GM10248 (cell line): ENCODE measurements at regions of chr11 and their contacts with region 1.

Region 1: GRCh38 chr11:74255741-74256369 is 55.6 kb downstream of the P4HA3 start:
- DNase-seq: peak; percentile 79
- CTCF ChIP-seq: peak; percentile 87

Region 2: GRCh38 chr11:73965076-73965860 is 290.6 kb before region 1 on chr11:
- CTCF ChIA-PET with region 1: interaction called, 11 read pairs
- POLR2A ChIA-PET with region 1: no interaction called
- DNase-seq: no peak
- CTCF ChIP-seq: no peak

Region 3: GRCh38 chr11:74237541-74237940 is 18.3 kb before region 1 on chr11:
- CTCF ChIA-PET with region 1: interaction called, 19 read pairs
- POLR2A ChIA-PET with region 1: no interaction called
- DNase-seq: no peak
- CTCF ChIP-seq: no peak

Region 4: DNA sequence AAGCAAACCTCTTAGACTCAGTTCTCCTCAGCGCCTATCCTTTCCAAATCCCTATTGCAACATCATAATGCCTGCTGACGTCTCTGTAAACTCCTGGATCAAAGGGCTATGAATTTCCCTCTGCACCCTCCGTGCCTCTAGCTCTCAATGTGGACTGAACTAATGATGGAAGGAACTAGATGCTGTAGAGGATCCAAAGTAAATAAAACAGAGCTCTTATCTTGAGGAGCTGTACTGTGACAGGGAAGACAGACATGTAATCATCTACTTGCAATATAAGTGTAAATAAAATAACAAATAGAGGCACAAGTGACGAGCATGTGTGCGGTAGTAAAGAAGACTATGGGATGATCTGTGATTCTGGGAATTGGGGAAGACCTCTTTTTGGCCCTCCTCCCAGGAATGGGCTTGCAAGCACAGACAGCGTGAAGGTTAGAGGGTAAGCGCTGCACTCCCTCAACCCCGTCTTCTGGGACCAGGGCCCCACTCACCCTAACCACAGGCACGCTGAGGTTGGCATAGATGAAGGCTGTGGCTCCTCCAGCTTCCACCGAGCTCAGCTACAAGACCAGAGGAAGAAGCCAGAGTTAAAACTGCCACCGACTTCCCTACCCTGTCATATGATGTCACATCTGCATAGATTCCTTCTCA is 13.4 kb after region 1 on chr11:
- CTCF ChIA-PET with region 1: interaction called, 16 read pairs
- POLR2A ChIA-PET with region 1: no interaction called
- DNase-seq: no peak
- CTCF ChIP-seq: no peak

Region 5: GRCh38 chr11:74321487-74322188 is 65.8 kb after region 1 on chr11:
- CTCF ChIA-PET with region 1: interaction called, 22 read pairs
- POLR2A ChIA-PET with region 1: no interaction called
- DNase-seq: no peak
- CTCF ChIP-seq: peak; percentile 50

Region 6: DNA sequence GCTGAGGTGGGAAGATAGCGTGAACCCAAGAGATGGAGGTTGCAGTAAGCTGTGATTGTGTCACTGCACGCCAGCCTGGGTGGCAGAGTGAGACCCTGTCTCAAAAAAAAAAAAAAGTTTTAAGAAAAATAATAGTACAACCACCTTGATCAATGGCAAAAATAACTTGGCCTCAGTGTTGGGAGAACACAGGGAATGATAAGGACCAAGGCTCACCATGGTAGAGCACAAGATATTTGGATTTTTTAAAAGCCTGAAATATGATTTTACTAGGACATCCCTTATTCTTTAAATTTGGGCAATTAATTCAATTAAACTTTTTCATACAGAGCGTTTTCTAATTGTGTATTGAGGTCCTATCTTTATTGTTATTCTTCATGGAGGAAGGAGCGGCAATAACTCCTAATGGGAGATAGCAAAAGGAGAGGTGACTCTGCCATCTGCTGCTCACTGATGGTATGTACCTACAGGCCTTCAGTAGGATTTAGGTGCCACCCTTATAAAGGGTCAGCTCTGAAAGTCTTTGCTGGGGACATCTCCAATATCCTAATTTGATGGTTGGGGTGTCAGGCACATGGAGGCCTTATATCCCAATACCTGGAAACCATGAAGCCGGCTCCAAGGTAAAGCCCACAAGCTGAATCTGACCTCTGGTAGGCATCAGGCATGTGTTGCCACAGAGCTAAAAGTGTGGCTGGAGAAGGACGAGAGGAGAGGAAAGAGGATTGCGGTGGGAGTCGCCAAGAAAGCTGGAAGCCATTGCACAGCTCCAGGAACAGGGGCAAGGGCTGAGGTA is 314.6 kb after region 1 on chr11:
- CTCF ChIA-PET with region 1: interaction called, 10 read pairs
- POLR2A ChIA-PET with region 1: no interaction called
- DNase-seq: peak; percentile 57
- CTCF ChIP-seq: peak; percentile 67